Activated B cell treated with CpG ODN at 0.5 μM for 24 hours (primary cell): ENCODE measurements at regions of chr12 and their contacts with region 1.

Region 1: DNA sequence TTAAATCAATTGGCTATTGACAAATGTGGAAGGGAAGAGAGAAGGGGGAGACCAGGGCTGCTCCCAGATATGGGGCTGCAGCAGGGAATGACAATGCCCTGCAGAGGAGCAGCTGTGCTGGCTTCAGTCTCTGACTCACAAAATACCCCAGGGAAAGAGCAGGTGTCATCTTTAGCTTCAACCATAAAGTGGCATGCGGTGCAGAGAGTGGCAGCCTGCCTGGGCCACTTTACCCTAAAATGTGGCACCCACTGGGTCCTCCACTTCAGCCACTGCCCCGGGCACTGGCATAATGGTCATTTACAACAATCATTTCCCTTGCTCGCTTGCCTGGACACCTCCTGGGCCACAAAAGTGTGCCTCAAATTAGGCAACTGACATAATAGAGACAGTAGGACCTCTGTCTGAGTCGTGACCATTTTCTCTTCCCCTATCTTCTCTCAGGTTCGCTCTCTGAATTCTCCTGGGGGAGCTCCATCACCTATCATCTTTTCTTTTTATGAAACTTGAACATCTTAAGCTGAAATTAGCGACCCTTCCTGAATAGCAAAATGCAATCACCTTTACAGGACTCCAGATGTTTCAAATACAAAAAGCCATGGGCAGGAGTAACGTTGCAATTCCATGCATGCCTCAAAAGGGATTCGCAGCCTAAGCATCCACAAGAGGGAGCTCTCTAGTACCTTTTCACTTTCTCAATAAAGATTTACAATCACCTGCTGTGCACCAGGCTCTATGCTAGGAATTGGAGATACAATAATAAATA is 179.9 kb upstream of the ATF7IP start:
- DNase-seq: peak; percentile 41
- ATAC-seq: peak; percentile 86
- H3K4me3 Mint-ChIP-seq: peak overlapping the region; percentile 69
- H3K27ac Mint-ChIP-seq: peak overlapping the region; percentile 87
- H3K4me1 Mint-ChIP-seq: peaks cover 30% of the 10 kb centered on the region
- H3K27me3 Mint-ChIP-seq: no peaks in the 10 kb centered on the region
- CTCF ChIP-seq: peak; percentile 28

Region 2: DNA sequence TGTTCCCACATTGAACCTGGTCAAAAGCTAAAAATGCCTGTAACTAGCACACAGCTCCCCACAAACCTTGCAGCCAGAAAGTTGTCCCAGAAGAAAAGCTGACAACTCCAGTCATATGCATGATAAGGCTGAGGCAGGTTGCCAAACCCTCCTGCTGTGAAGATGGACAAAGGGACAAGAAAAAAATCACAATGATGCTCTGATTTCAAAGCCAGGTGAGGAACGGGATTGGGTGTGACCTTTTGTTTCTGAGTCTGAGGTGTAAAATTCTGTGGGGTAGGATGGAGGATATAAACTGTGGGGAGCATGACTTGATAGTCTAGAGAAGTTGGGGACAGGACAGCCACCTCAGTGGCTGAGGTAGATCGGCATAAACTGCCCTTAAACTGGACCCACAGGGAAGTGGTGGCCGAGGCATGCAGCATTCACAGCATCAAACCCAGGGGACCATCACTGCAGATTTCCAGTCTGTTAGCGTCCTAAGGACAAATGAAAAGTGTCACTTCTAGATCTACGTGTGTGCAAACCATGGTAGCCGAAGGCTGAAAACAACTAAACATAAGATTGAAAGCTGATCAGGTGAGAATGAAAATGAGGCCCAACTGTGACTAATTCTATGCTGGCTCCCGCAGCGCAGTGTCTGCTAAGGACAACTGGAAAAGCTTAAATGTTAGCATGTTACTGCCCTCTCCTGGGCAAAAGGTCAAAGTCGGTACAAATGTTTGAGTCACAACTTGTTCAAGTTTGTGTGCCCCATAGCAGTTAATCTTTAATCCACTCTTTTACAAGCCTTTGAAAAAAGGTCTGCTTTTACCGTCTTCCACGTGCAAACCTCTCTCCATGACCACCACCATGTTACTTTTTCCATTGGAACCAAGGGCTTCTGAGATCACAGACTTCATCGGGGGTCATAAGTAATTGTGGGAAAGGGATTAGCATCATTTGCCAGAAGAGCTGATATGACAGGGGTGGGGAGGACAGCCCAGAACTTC is 244.1 kb before region 1 on chr12:
- CTCF ChIA-PET with region 1: no interaction called
- POLR2A ChIA-PET with region 1: no interaction called
- intact Hi-C with region 1: no loop called
- DNase-seq: no peak
- ATAC-seq: peak; percentile 31
- H3K4me3 Mint-ChIP-seq: no peak overlapping the region
- H3K27ac Mint-ChIP-seq: no peak overlapping the region
- H3K4me1 Mint-ChIP-seq: peaks cover 7% of the 10 kb centered on the region
- H3K27me3 Mint-ChIP-seq: peaks cover 20% of the 10 kb centered on the region
- CTCF ChIP-seq: no peak

Region 3: GRCh38 chr12:14157088-14157747 is 28.4 kb before region 1 on chr12:
- CTCF ChIA-PET with region 1: interaction called, 8 read pairs
- POLR2A ChIA-PET with region 1: interaction called, 3 read pairs
- intact Hi-C with region 1: loop called (anchors 1 kb)
- DNase-seq: no peak
- ATAC-seq: peak; percentile 91
- H3K4me3 Mint-ChIP-seq: peak overlapping the region; percentile 62
- H3K27ac Mint-ChIP-seq: peak overlapping the region; percentile 97
- H3K4me1 Mint-ChIP-seq: peaks cover 71% of the 10 kb centered on the region
- H3K27me3 Mint-ChIP-seq: no peaks in the 10 kb centered on the region
- CTCF ChIP-seq: no peak

Region 4: GRCh38 chr12:14216405-14217294 is 31.0 kb after region 1 on chr12:
- CTCF ChIA-PET with region 1: interaction called, 15 read pairs
- POLR2A ChIA-PET with region 1: interaction called, 4 read pairs
- intact Hi-C with region 1: loop called (anchors 2 kb)
- DNase-seq: no peak
- ATAC-seq: peak; percentile 62
- H3K4me3 Mint-ChIP-seq: peak overlapping the region; percentile 70
- H3K27ac Mint-ChIP-seq: peak overlapping the region; percentile 82
- H3K4me1 Mint-ChIP-seq: peaks cover 34% of the 10 kb centered on the region
- H3K27me3 Mint-ChIP-seq: no peaks in the 10 kb centered on the region
- CTCF ChIP-seq: no peak

Region 5: DNA sequence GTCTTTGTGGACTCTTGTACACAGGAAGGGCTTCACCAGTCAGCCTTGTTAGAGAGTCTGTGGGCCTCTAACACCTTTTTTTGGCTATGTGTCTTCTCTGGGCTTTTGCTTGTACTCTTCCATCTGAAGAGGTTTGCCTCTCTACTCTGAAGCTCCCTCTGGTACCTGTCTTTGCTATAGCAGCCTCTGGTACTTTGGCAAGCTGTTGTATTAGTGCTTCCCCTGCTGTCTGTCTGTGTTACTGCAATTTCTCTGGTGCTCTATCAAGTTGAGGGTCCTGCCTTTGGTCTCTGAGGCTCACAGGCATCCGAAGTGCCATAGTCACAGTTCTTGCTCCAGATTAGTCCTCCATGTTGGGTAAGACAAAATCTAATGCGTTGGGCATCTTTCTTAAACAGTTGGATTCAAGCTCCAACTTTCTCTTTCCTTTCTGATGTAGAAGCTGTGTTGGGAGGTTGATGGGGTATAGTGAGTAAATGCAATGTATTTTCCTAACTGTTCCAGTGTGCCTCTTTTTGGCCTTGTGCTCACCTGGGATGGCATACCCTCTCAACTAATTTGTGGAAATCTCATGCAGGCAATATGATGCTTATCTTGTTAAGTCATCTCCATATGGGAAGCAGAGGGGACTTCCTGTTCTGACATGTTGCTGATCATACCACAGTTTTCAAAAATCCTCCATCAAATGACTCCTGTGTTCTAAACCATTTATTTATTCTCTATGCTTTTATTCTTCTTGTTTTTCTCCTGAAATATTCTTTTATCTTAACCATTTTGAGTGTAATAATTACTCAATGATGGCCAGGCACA is 268.7 kb after region 1 on chr12:
- CTCF ChIA-PET with region 1: interaction called, 19 read pairs
- POLR2A ChIA-PET with region 1: no interaction called
- intact Hi-C with region 1: loop called (anchors 1 kb)
- DNase-seq: no peak
- ATAC-seq: peak; percentile 97
- H3K4me3 Mint-ChIP-seq: no peak overlapping the region
- H3K27ac Mint-ChIP-seq: peak overlapping the region; percentile 74
- H3K4me1 Mint-ChIP-seq: peaks cover 41% of the 10 kb centered on the region
- H3K27me3 Mint-ChIP-seq: no peaks in the 10 kb centered on the region
- CTCF ChIP-seq: no peak

Region 6: DNA sequence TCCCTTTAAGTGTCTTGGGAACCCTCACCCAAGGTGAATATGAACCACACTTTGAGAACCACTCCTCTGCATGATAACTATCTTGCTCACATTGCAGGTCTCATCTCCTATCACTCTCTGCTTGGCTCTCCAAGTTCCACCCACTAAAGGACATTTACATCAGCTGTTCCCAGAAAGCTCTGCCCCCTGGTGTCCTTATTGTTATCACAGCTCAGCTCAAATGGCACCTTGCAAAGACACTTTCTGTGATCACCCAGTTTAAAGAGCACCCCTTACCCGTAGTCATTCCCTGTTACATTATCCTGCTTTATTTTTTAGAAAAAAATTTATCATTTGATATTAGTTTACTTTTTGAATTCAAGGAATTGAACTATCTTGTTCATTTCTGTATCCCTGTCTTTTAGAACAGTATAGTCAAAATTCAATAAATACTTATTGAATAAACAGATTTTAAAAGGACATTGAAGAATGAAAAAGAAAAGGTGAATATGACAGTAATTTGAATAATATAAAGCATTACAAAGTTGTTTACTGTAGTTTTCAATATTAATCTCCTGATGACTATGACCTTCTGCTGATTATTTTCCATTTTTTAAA is 531.3 kb after region 1 on chr12:
- CTCF ChIA-PET with region 1: interaction called, 3 read pairs
- POLR2A ChIA-PET with region 1: no interaction called
- intact Hi-C with region 1: loop called (anchors 5 kb)
- DNase-seq: no peak
- ATAC-seq: peak; percentile 75
- H3K4me3 Mint-ChIP-seq: no peak overlapping the region
- H3K27ac Mint-ChIP-seq: no peak overlapping the region
- H3K4me1 Mint-ChIP-seq: peaks cover 2% of the 10 kb centered on the region
- H3K27me3 Mint-ChIP-seq: peaks cover 8% of the 10 kb centered on the region
- CTCF ChIP-seq: peak; percentile 15